ENCODE measurements at regions of chr5 and their contacts with region 1.

Region 1: GRCh38 chr5:159106569-159107282 is 7.0 kb upstream of the EBF1 start:
- DNase-seq: peak; percentile 60
- H3K4me3 ChIP-seq: peak overlapping the region; percentile 39
- H3K27ac ChIP-seq: no peak overlapping the region
- H3K27me3 ChIP-seq: no peaks in the 10 kb centered on the region
- CTCF ChIP-seq: peak; percentile 90

Region 2: GRCh38 chr5:158174918-158175851 is 931.5 kb before region 1 on chr5:
- in situ Hi-C with region 1: loop called (anchors 25 kb)
- DNase-seq: peak; percentile 69
- H3K4me3 ChIP-seq: no peak overlapping the region
- H3K27ac ChIP-seq: no peak overlapping the region
- H3K27me3 ChIP-seq: no peaks in the 10 kb centered on the region
- CTCF ChIP-seq: peak; percentile 92

Region 3: DNA sequence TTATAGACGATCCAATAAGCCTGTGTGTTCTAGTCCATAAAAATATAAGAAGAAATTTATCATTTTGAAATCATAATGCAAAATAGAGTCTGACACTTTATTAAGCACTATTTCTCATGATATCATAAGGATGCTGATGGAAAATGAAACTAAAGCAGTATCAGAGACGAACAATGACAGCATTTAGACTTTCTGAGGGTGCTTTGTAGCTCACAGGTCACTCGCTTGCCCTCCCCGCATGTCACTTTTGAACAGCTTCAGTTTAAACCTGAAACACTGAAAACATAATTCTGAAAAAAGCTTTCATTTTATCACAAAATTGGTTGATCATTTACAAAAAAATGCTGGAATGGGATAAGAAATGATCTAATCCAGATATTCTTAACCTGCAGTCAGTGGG is 254.1 kb before region 1 on chr5:
- in situ Hi-C with region 1: no loop called
- DNase-seq: no peak
- H3K4me3 ChIP-seq: no peak overlapping the region
- H3K27ac ChIP-seq: no peak overlapping the region
- H3K27me3 ChIP-seq: no peaks in the 10 kb centered on the region
- CTCF ChIP-seq: no peak

Region 4: GRCh38 chr5:158869092-158869491 is 237.6 kb before region 1 on chr5:
- in situ Hi-C with region 1: no loop called
- DNase-seq: no peak
- H3K4me3 ChIP-seq: no peak overlapping the region
- H3K27ac ChIP-seq: no peak overlapping the region
- H3K27me3 ChIP-seq: no peaks in the 10 kb centered on the region
- CTCF ChIP-seq: no peak

Region 5: GRCh38 chr5:158976035-158976434 is 130.7 kb before region 1 on chr5:
- in situ Hi-C with region 1: no loop called
- DNase-seq: peak; percentile 47
- H3K4me3 ChIP-seq: no peak overlapping the region
- H3K27ac ChIP-seq: no peak overlapping the region
- H3K27me3 ChIP-seq: no peaks in the 10 kb centered on the region
- CTCF ChIP-seq: no peak

Region 6: GRCh38 chr5:159163027-159163700 is 56.4 kb after region 1 on chr5:
- in situ Hi-C with region 1: no loop called
- DNase-seq: peak; percentile 63
- H3K4me3 ChIP-seq: no peak overlapping the region
- H3K27ac ChIP-seq: peak overlapping the region; percentile 57
- H3K27me3 ChIP-seq: no peaks in the 10 kb centered on the region
- CTCF ChIP-seq: no peak

Measured in brain microvascular endothelial cell (primary cell).